ENCODE measurements at regions of chr1 and their contacts with region 1.

Region 1: GRCh38 chr1:26864610-26865527 is 1.9 kb downstream of the SFN start:
- DNase-seq: peak; percentile 99
- H3K4me3 Mint-ChIP-seq: peak overlapping the region; percentile 97
- H3K27ac Mint-ChIP-seq: peak overlapping the region; percentile 94
- H3K4me1 Mint-ChIP-seq: peaks cover 21% of the 10 kb centered on the region
- H3K27me3 Mint-ChIP-seq: no peaks in the 10 kb centered on the region
- CTCF ChIP-seq: no peak

Region 2: GRCh38 chr1:26529655-26530409 is 335.0 kb before region 1 on chr1 and contains the start of gene RPS6KA1:
- CTCF ChIA-PET with region 1: no interaction called
- POLR2A ChIA-PET with region 1: interaction called, 13 read pairs
- intact Hi-C with region 1: no loop called
- DNase-seq: peak; percentile 56
- H3K4me3 Mint-ChIP-seq: peak within 1 kb of the TSS; percentile 89
- H3K27ac Mint-ChIP-seq: peak within 1 kb of the TSS; percentile 90
- H3K4me1 Mint-ChIP-seq: peaks cover 14% of the 10 kb centered on the region
- H3K27me3 Mint-ChIP-seq: no peaks in the 10 kb centered on the region
- CTCF ChIP-seq: no peak
- total RNA-seq, gene RPS6KA1: 43.9 and 50.9 TPM in 2 replicates

Region 3: DNA sequence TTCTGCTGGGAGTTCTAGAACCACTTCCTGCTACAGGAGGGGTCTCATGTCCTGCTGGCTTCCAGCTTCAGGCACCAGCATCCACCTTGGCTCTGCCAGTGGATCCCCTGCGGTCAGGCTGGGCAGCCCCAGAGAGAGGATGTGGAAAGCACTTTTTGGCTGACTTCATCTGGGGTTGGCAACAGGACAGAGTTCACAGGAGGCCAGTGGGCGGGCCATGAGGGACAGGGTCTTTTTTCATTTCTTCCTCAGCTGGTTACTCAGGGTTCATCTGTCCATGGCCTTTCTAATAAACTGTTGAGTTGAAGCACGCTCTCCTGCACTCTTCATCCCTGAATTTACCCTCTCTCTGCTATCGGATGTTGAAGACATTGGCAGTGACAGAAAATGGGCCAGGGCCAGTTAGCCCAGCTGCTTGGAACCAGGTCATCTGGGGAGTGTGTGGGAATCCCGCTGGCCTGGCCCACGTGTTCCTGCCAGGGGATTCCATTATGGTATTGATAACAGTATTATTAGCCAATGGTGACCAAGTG is 290.1 kb before region 1 on chr1:
- CTCF ChIA-PET with region 1: no interaction called
- POLR2A ChIA-PET with region 1: no interaction called
- intact Hi-C with region 1: no loop called
- DNase-seq: no peak
- H3K4me3 Mint-ChIP-seq: no peak overlapping the region
- H3K27ac Mint-ChIP-seq: no peak overlapping the region
- H3K4me1 Mint-ChIP-seq: no peaks in the 10 kb centered on the region
- H3K27me3 Mint-ChIP-seq: no peaks in the 10 kb centered on the region
- CTCF ChIP-seq: no peak

Region 4: GRCh38 chr1:26853156-26853555 is 11.7 kb before region 1 on chr1:
- CTCF ChIA-PET with region 1: interaction called, 23 read pairs
- POLR2A ChIA-PET with region 1: interaction called, 131 read pairs
- intact Hi-C with region 1: loop called (anchors 2 kb)
- DNase-seq: peak; percentile 94
- H3K4me3 Mint-ChIP-seq: no peak overlapping the region
- H3K27ac Mint-ChIP-seq: no peak overlapping the region
- H3K4me1 Mint-ChIP-seq: peaks cover 30% of the 10 kb centered on the region
- H3K27me3 Mint-ChIP-seq: no peaks in the 10 kb centered on the region
- CTCF ChIP-seq: peak; percentile 81

Region 5: DNA sequence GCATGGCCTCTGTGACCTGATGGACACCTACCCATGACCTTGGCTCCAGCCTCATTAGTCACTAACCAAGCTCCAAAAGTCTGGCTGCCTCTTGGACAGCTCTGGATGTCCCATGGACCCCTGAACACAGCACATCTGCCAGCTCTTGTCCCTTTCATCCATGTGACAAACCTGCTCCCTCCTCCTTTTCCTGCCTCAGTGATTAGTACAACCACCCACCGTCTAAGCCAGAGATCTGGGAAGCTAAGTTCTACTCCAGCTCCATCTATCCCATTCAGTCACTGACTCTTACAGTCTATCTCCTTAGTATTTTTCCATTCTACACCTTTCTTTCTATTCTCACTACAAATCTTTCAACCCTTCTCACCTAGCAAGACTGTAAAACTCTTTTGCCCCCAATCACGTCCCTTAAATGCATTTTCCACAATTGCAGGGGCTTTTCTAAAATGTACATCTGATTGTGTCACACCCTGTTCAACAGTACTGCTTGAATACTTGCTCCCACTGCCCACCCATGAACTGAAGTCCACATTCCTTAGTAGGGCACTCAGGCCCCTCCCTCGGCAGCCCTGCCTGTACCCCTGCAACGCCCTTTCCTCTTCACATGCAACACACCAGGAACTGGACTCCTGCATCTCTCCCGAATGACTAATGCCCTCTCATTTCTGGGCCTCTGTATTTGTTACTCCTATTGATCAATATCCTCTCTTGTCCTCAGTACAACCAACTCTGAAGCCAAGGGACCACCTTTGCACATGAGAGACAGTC is 18.0 kb after region 1 on chr1:
- CTCF ChIA-PET with region 1: interaction called, 27 read pairs
- POLR2A ChIA-PET with region 1: interaction called, 50 read pairs
- intact Hi-C with region 1: no loop called
- DNase-seq: no peak
- H3K4me3 Mint-ChIP-seq: no peak overlapping the region
- H3K27ac Mint-ChIP-seq: no peak overlapping the region
- H3K4me1 Mint-ChIP-seq: no peaks in the 10 kb centered on the region
- H3K27me3 Mint-ChIP-seq: no peaks in the 10 kb centered on the region
- CTCF ChIP-seq: no peak

Region 6: DNA sequence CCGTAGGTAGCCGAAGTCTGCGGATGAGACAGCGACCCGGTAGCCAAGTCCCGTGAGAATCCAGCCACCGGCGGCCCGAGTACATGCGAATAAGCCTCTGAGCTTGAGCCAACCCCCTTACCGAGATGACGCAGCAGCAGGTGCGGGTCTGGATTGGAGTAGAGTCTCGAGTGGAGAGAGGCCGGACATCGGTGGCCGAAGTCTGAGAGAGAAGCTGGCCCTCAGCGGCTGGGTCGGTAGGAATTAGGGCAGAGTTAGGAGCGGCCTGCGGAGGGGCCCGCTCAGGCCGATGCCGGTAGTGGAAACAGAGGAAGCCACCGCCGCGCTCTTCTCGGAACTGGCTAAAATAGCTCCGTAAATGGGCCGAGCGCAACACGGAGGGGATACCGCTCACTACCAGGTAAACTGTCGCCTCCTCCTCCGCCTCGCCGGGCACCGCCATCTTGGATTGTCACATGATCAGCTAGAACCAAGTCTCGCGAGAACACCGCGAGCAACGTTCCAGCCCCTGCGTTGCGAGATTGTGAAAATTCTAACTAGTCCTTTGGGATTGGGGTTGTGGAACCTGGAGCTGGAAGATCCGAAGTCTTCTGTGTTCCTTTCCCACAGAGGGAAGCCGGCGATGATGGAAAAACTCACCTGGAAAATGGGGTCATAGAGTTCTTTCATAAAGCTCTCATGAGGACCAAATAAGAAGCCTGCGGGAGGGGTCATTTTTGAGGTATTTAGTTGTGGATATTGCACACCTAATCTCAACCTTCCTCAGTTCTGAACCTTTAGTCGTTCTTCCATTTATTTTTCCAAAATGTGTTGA is 35.3 kb after region 1 on chr1 and contains the start of gene GPATCH3:
- CTCF ChIA-PET with region 1: interaction called, 5 read pairs
- POLR2A ChIA-PET with region 1: interaction called, 17 read pairs
- intact Hi-C with region 1: no loop called
- DNase-seq: peak; percentile 94
- H3K4me3 Mint-ChIP-seq: peak within 1 kb of the TSS; percentile 90
- H3K27ac Mint-ChIP-seq: peak within 1 kb of the TSS; percentile 98
- H3K4me1 Mint-ChIP-seq: peaks cover 15% of the 10 kb centered on the region
- H3K27me3 Mint-ChIP-seq: no peaks in the 10 kb centered on the region
- CTCF ChIP-seq: no peak
- total RNA-seq, gene GPATCH3: 9.9 and 14.1 TPM in 2 replicates

Region 7: DNA sequence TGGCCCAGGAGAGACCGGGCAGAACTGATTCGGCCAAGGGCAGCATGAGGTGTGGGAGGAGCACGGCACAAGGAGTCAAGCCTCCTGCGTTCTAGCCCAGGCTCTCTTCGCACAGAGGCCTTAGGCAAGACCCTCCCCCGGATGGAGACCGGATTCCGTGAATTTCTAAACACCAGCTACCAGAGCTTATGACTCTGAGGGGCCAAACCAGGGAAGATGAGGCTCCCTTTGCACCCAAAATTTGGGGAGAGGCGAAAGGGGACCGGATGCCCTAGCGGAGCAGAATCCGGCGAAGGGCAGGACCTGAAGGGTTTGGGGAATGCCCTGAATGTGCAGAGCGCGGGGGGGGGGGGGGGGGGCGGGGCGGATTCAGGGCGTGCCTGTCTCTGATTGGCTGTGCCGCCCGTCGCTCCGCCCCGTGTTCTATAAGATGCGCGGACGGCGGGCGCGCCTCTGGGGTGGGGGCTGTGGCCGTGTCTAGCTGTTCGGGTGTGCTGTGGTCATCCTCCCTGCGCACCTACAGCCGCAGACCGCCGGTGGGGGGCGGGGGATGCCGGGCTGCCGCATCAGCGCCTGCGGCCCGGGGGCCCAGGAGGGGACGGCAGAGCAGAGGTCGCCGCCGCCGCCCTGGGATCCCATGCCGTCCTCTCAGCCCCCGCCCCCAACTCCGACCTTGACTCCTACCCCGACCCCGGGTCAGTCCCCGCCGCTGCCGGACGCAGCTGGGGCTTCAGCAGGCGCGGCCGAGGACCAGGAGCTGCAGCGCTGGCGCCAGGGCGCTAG is 128.6 kb after region 1 on chr1 and contains the start of gene TRNP1:
- CTCF ChIA-PET with region 1: interaction called, 3 read pairs
- POLR2A ChIA-PET with region 1: interaction called, 17 read pairs
- intact Hi-C with region 1: no loop called
- DNase-seq: peak; percentile 81
- H3K4me3 Mint-ChIP-seq: peak within 1 kb of the TSS; percentile 80
- H3K27ac Mint-ChIP-seq: peak within 1 kb of the TSS; percentile 92
- H3K4me1 Mint-ChIP-seq: peaks cover 45% of the 10 kb centered on the region
- H3K27me3 Mint-ChIP-seq: no peaks in the 10 kb centered on the region
- CTCF ChIP-seq: no peak
- total RNA-seq, gene TRNP1: 56.3 and 59.2 TPM in 2 replicates

Measured in MCF 10A (cell line).